Ascending aorta (tissue), 2 donors: ENCODE measurements at regions of chr4 and their contacts with region 1.

Region 1: GRCh38 chr4:68630373-68630772 is 40.1 kb downstream of the UGT2B15 start:
- DNase-seq: no peak
- H3K4me3 ChIP-seq: no peak overlapping the region
- H3K27ac ChIP-seq: no peak overlapping the region
- H3K4me1 ChIP-seq: no peaks in the 10 kb centered on the region
- H3K27me3 ChIP-seq: no peaks in the 10 kb centered on the region
- CTCF ChIP-seq: no peak

Region 2: DNA sequence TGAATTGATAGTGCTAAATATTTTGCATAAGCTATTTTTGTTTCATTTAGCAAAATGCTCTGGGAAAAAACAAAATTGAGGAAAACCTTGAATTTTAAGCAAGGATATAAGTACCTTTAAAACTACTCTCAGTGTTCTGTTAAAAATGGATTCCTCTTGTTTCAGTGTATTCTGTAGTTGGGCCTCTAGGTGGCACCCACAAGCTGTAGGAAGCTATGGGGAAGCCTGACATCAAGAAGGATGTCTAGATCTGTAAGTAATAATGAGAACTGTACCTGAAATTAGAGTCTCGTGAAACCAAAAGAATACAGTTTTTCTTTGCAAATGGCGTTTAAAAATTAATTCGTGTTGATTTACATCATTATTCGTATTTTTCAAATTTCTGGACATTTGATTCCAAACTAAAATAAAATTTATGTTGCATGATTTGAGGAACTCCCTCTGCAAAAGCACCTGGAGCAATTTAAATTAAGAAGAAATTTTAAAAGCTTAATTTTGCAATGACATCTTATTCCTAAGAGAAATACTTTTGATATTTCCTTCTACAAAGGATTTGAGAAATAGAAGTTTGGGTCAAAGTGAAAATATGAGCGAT is 131.9 kb before region 1 on chr4:
- intact Hi-C with region 1: loop called (anchors 5 kb)
- DNase-seq: no peak
- H3K4me3 ChIP-seq: no peak overlapping the region
- H3K27ac ChIP-seq: no peak overlapping the region
- H3K4me1 ChIP-seq: no peaks in the 10 kb centered on the region
- H3K27me3 ChIP-seq: no peaks in the 10 kb centered on the region
- CTCF ChIP-seq: peak; percentile 13 to 63 (median 61)

Region 3: DNA sequence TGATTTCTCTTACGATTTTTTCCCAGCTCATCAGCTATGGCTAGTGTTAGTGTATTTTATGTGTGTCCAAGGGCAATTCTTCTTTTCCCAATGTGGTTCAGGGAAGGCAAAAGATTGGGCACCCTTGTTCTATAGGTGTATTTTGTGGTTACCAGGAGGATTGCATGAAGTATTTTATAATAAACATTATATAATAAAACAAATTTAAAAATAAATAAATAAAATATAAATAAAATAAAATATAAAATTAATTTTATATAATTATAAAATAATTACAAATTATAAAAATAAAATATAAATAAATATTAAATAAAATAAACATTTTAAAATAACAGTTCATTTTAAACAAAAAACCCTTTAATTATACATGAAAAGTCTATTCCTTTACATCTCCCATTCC is 149.9 kb after region 1 on chr4:
- intact Hi-C with region 1: no loop called
- DNase-seq: no peak
- H3K4me3 ChIP-seq: no peak overlapping the region
- H3K27ac ChIP-seq: no peak overlapping the region
- H3K4me1 ChIP-seq: no peaks in the 10 kb centered on the region
- H3K27me3 ChIP-seq: no peaks in the 10 kb centered on the region
- CTCF ChIP-seq: no peak